ENCODE measurements at regions of chr5 and their contacts with region 1.

Region 1: DNA sequence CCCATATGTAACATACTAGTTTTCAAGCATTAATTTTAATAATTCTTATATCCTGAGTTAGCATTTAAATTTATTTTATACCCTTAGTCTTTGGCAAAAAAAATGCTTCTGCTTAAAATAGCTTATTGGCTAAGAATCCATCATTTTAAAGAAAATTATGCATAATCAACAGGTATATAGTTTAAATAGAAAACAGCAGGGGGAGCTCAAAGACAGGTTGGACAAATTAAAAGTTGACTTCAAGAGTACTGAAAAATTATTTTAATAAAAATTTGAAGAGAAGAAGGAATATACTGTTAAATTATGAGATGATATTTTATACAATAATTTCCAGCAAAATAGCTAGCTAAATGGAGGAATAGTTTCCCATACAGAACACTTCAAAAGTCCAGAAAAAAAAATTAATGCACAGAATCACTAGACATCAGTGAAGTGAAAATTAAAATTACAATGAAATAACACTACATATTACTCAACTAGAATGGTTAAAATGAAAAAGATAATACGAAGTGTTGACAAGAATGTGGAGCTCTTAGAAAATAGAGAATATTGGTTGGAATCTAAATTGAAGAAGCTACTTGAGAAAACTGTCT is 387.1 kb downstream of the PDE4D start:
- DNase-seq: no peak
- ATAC-seq: no peak
- H3K4me3 ChIP-seq: no peak overlapping the region
- H3K27ac ChIP-seq: no peak overlapping the region
- H3K4me1 ChIP-seq: no peaks in the 10 kb centered on the region
- H3K27me3 ChIP-seq: no peaks in the 10 kb centered on the region
- CTCF ChIP-seq: peak; percentile 25 to 48 (median 47); a peak in 3 of 6 replicates
- POLR2A ChIP-seq: no peak
- RAD21 ChIP-seq: peak; percentile 55

Region 2: GRCh38 chr5:59660737-59661136 is 154.4 kb after region 1 on chr5:
- CTCF ChIA-PET with region 1: interaction called, 18 read pairs
- POLR2A ChIA-PET with region 1: no interaction called
- RAD21 ChIA-PET with region 1: no interaction called
- intact Hi-C with region 1: no loop called
- DNase-seq: no peak
- ATAC-seq: no peak
- H3K4me3 ChIP-seq: no peak overlapping the region
- H3K27ac ChIP-seq: no peak overlapping the region
- H3K4me1 ChIP-seq: no peaks in the 10 kb centered on the region
- H3K27me3 ChIP-seq: peaks cover 5% of the 10 kb centered on the region
- CTCF ChIP-seq: 0 out of 6 replicates have a peak, but pooled peaks of 2 of the 3 experiments have one; percentile 7 to 20
- POLR2A ChIP-seq: no peak
- RAD21 ChIP-seq: peak; percentile 28; the same call in 1 of the 2 replicates

Region 3: DNA sequence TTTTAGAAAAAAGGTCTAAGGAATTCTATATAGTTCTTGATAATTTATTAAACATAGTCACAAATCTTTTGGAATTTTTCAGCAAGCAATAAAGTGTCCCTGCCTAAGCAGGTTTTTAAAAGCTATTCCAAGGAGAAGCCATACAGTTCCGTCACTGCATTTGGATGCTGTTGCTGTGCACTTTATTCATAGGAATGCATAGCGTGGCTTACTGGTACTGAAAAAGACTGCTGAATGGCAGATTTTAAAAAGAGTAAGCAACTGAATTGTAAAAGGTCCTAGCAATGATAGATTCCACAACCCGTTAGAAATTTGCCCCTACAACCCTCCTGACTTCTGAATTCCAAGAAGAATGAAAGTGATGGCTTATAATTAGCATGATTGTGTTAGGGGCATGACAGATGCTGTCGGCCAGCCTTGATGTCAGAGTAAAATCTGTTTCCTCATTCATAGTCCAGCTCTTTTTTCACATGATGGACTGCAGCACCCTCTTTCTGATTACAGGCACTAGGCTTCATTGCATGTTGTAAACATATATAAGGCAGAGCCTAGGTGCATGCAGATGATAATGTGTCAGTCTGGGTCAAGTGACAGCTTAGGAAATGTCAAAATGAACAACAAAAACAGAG is 160.2 kb after region 1 on chr5:
- CTCF ChIA-PET with region 1: interaction called, 18 read pairs
- POLR2A ChIA-PET with region 1: no interaction called
- RAD21 ChIA-PET with region 1: no interaction called
- intact Hi-C with region 1: no loop called
- DNase-seq: no peak
- ATAC-seq: no peak
- H3K4me3 ChIP-seq: no peak overlapping the region
- H3K27ac ChIP-seq: no peak overlapping the region
- H3K4me1 ChIP-seq: no peaks in the 10 kb centered on the region
- H3K27me3 ChIP-seq: no peaks in the 10 kb centered on the region
- CTCF ChIP-seq: no peak
- POLR2A ChIP-seq: no peak
- RAD21 ChIP-seq: no peak

Region 4: GRCh38 chr5:59673438-59674058 is 167.2 kb after region 1 on chr5:
- CTCF ChIA-PET with region 1: interaction called, 43 read pairs
- POLR2A ChIA-PET with region 1: no interaction called
- RAD21 ChIA-PET with region 1: no interaction called
- intact Hi-C with region 1: loop called (anchors 1 kb)
- DNase-seq: peak; percentile 8
- ATAC-seq: peak; percentile 55; the same call in 1 of the 2 replicates
- H3K4me3 ChIP-seq: no peak overlapping the region
- H3K27ac ChIP-seq: no peak overlapping the region
- H3K4me1 ChIP-seq: no peaks in the 10 kb centered on the region
- H3K27me3 ChIP-seq: 0 out of 2 replicates have a peak, but pooled peaks cover 5% of the 10 kb centered on the region
- CTCF ChIP-seq: peak; percentile 33 to 82 (median 64); a peak in 5 of 6 replicates
- POLR2A ChIP-seq: no peak
- RAD21 ChIP-seq: peak; percentile 57

Region 5: DNA sequence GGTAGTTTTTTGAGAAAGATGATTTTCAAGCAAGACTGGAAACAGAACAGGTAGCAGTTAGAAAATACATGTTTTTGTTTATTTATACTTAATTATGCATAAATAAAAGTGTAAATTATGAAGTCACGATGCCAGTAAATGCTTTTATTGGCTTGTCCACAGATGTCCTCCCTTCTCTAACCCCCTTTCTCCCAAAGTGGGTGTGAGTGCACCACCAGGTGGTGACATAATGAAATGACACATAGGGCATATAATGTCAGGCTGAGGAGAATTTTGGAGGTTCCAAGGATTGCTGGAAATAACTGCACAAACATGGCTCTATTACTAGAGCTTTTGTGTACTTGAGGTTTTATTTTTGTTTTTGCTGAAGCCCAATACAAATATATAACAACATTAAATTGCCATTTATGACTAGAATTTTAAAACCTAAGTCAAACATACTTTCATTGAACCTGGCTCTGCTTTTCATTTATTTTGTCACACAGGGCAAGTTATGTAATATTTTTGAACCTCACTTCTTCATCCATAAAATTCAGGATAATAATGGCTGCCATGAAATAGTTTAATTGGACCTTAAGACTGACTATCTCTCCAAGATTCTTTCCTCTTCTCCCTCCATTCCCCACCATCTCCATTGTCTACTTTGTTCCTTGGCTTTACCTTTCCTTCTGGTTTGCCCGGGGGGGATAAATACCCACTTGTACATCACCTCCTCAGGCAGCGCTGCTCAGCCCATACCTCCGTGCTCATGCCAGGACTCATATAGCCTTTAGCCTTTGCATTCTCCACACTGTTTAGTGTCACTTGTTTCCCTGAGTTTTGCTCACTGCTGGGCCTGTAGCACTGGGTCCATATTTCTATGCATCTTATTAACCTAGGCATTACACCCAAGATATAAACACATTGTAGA is 218.4 kb after region 1 on chr5:
- CTCF ChIA-PET with region 1: interaction called, 3 read pairs
- POLR2A ChIA-PET with region 1: no interaction called
- RAD21 ChIA-PET with region 1: no interaction called
- intact Hi-C with region 1: loop called (anchors 2 kb)
- DNase-seq: peak; percentile 12
- ATAC-seq: peak; percentile 83
- H3K4me3 ChIP-seq: no peak overlapping the region
- H3K27ac ChIP-seq: no peak overlapping the region
- H3K4me1 ChIP-seq: no peaks in the 10 kb centered on the region
- H3K27me3 ChIP-seq: 0 out of 2 replicates have a peak, but pooled peaks cover 3% of the 10 kb centered on the region
- CTCF ChIP-seq: peak; percentile 46 to 68 (median 66); a peak in 5 of 6 replicates
- POLR2A ChIP-seq: no peak
- RAD21 ChIP-seq: peak; percentile 50; the same call in 1 of the 2 replicates

Region 6: DNA sequence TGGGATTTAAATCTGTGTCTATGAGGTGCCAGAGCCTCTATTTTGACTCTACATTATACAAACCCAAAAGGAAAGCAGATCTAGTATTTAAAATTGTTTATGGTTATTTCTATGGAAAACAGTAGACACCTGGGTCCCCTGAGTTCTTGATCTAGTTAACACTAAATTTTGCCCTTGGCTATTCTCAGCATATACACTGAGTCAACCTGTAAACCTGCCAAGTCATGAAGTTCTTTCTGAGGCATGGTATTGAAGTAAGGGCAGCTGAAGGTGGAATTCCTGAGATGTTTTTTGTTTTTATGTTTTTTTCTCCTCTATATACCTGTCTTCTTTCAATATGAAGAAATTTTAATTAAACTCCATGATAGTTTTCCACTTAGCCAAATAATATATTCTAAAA is 266.9 kb after region 1 on chr5:
- CTCF ChIA-PET with region 1: no interaction called
- POLR2A ChIA-PET with region 1: no interaction called
- RAD21 ChIA-PET with region 1: no interaction called
- intact Hi-C with region 1: no loop called
- DNase-seq: no peak
- ATAC-seq: no peak
- H3K4me3 ChIP-seq: no peak overlapping the region
- H3K27ac ChIP-seq: no peak overlapping the region
- H3K4me1 ChIP-seq: no peaks in the 10 kb centered on the region
- H3K27me3 ChIP-seq: peaks cover 11% of the 10 kb centered on the region
- CTCF ChIP-seq: no peak
- POLR2A ChIP-seq: no peak
- RAD21 ChIP-seq: no peak

Region 7: DNA sequence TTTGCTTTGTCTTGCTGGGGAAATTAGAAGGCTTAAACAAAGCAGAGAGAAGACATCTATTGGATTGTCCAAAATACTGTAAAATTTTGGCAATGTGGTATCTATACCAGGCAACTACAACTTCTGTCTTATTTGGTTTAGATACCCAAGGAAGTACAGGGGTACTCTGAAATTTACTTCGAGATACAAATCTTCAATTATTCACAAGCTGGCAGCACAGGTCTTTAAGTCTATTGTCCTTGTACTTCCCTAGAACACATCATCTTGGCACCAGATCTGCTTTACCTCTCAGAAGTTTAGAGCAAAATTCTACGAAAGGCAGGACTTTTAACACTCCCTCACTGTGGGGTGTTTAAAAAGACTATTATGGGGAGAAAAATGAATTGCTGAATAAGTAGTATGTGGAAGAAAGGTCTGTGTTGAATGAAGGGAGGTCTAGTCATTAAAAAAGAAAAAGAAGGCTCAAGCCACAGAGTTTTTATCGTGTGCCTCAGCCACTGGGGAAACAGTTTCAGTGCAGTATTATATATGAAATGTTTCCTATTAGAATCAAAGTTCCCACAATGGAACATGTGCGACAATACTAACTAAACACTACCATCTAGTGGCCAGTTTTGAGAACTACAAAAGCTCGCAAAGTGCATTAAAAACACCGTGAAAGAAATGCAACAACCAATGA is 293.4 kb after region 1 on chr5:
- CTCF ChIA-PET with region 1: interaction called, 15 read pairs
- POLR2A ChIA-PET with region 1: no interaction called
- RAD21 ChIA-PET with region 1: no interaction called
- intact Hi-C with region 1: loop called (anchors 1 kb)
- DNase-seq: peak; percentile 37
- ATAC-seq: peak; percentile 74
- H3K4me3 ChIP-seq: no peak overlapping the region
- H3K27ac ChIP-seq: no peak overlapping the region
- H3K4me1 ChIP-seq: no peaks in the 10 kb centered on the region
- H3K27me3 ChIP-seq: no peaks in the 10 kb centered on the region; the same call in none of the 2 replicates
- CTCF ChIP-seq: peak; percentile 50 to 77 (median 54); a peak in 5 of 6 replicates
- POLR2A ChIP-seq: no peak
- RAD21 ChIP-seq: peak; percentile 72